ENCODE measurements at regions of chr10 and their contacts with region 1.

Region 1: GRCh38 chr10:132023092-132023811 is 41.5 kb upstream of the BNIP3 start:
- DNase-seq: peak; percentile 47
- H3K4me3 ChIP-seq: peak overlapping the region; percentile 48
- H3K27ac ChIP-seq: no peak overlapping the region
- H3K27me3 ChIP-seq: peaks cover 12% of the 10 kb centered on the region
- CTCF ChIP-seq: peak; percentile 97

Region 2: DNA sequence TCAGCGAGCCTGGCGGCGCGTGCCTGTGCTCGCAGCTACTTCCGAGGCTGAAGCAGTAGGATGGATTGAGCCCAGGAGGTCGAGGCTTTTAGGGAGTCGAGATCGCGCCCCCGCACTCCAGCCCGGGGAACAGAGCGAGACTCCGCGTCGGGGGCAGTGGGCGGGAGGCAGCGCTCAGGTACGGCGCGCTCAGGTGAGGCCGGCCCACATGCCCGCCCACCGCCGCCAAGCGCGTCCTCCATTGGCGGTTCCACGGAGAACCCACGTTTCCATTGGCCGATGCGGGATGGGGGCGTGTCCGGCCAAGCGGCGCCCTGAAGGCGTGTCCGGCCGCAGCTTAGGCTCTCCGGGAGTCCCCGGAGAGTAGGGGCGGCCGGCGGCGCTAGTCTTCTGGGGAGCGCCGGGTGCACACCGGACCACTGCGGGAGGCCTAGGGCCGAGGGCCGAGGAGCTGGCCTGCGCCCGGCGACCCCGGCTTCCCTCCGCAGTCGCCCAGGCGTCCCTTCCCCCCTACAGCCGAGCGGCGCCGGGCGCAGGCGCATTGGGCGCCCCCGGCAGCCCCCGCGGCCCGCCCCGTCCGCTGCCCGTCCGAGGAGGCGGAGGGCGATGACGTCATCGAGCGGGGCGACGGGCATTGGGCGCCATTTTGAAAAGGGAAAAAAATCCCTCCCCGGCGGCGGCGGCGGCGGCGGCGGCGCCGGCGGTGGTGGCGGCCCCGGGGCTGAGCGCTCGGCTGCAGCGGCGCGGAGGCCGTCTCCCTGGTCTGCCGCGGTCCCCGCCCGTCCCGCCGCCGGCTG is 122.7 kb before region 1 on chr10 and contains the start of gene PPP2R2D:
- CTCF ChIA-PET with region 1: interaction called, 38 read pairs
- POLR2A ChIA-PET with region 1: no interaction called
- DNase-seq: peak; percentile 57
- H3K4me3 ChIP-seq: peak within 1 kb of the TSS; percentile 79
- H3K27ac ChIP-seq: peak within 1 kb of the TSS; percentile 47
- H3K27me3 ChIP-seq: peaks cover 30% of the 10 kb centered on the region
- CTCF ChIP-seq: no peak
- polyA plus RNA-seq, gene PPP2R2D: 27.2 and 27.9 TPM in 2 replicates

Region 3: DNA sequence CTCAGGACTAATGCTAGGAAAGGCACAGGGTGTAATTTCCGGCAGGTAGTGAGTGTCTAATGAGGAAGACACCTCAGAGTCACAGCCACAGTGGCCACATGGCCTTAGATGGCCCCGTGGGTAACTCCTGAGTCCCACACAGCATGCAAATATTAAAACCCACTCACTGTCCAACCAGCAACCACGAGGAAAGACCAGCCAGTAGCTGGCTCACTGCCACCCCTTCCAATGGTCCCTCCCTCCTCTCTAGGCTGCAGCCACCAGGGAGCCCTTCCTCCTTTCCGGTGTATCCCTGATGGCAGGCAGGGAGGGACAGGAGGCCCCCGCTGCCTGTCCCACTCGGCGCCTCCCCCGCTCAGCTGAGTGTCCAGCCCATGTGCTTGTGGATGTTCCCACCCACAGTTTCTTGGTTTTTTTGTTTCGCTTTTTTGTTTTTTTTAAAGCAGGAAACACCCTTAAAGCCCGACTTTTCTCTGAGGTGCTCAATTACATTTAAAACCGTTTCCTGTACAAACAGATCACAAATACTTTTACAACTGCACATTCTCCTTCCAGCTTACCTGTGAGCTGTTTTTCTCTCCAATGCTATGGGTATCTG is 50.7 kb before region 1 on chr10:
- CTCF ChIA-PET with region 1: interaction called, 24 read pairs
- POLR2A ChIA-PET with region 1: no interaction called
- DNase-seq: no peak
- H3K4me3 ChIP-seq: no peak overlapping the region
- H3K27ac ChIP-seq: no peak overlapping the region
- H3K27me3 ChIP-seq: no peaks in the 10 kb centered on the region
- CTCF ChIP-seq: no peak

Region 4: GRCh38 chr10:131997366-131998049 is 25.7 kb before region 1 on chr10:
- CTCF ChIA-PET with region 1: interaction called, 31 read pairs
- POLR2A ChIA-PET with region 1: no interaction called
- DNase-seq: peak; percentile 74
- H3K4me3 ChIP-seq: 0 out of 2 replicates have a peak overlapping the region, but pooled peaks have one; percentile 4
- H3K27ac ChIP-seq: peak overlapping the region; percentile 57
- H3K27me3 ChIP-seq: peaks cover 7% of the 10 kb centered on the region
- CTCF ChIP-seq: no peak

Region 5: DNA sequence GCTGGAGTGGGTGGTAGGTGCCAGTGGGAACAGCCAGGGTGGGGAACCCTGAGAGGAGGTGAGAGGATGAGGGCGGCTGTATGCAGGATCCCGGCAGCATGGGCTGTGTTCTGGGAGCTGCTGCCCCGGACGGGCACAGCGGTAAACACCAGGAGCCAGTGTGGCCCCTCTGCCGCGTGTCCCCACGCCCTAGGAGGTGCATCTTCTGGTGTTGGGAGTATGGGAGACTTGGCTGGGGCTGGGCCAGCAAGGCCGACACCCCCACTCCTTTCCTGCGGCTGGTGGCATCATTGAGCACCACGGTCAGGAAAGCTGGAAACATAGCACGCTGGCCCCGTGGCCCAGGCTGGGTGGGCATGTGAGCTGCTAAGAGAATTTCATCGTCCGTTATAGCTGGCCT is 18.1 kb after region 1 on chr10:
- CTCF ChIA-PET with region 1: interaction called, 14 read pairs
- POLR2A ChIA-PET with region 1: no interaction called
- DNase-seq: no peak
- H3K4me3 ChIP-seq: no peak overlapping the region
- H3K27ac ChIP-seq: no peak overlapping the region
- H3K27me3 ChIP-seq: peaks cover 48% of the 10 kb centered on the region
- CTCF ChIP-seq: no peak

Measured in AG04450 (cell line).